A549 (cell line): ENCODE measurements at regions of chr9 and their contacts with region 1.

Region 1: DNA sequence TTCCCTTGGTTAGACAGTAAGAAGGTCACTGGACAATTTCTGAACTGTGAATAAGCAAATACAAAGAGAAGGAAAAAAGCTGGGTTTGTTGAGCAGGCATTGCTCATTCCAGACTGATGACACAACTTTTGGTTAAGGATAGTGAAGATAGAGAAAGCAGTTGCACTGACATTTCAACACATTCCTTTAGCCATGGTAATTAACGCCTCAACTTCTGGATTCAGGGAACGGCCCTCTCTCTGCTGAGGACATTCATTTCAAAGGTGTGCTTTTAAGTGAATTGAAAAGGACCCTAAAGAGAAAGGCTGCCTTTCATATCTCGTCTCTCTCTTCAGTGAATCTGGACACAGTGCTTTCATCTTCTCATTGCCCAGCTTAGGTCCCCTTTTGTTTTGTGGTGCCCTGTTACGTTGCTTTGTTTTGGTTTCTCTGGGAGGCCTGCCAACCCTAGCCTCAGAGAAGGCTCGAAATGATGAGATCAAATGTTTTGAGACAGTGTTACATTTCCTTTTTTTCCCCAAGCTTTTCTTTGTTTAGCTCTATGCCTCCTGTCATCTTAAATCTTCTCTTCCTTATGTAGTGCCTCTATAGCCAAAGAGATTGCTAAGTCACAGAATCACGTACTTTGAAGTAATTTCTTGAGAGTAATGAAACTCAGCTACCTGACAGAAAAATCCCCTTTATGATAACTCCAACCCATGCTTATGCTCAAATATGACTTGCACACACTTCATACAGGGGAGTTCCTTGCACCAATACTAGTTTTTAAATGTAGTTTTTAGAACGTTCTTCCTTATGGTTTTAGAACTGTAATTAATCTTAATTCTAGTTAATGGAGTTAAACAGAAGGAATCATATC is 94.4 kb upstream of the IFNE start:
- DNase-seq: peak in 1 of 2 experiments; percentile 80
- ATAC-seq: peak; percentile 70
- H3K4me3 ChIP-seq: peak overlapping the region; percentile 25; the same call in 2 of the 3 replicates
- H3K27ac ChIP-seq: peak overlapping the region; percentile 85 to 93
- H3K4me1 ChIP-seq: peaks cover 86% of the 10 kb centered on the region
- CTCF ChIP-seq: no peak
- EP300 ChIP-seq: peak; percentile 32 to 62; a peak in 2 of 5 replicates
- POLR2A ChIP-seq: no peak
- RAD21 ChIP-seq: peak in 1 of 2 experiments; percentile 1; a peak in 1 of 5 replicates

Region 2: DNA sequence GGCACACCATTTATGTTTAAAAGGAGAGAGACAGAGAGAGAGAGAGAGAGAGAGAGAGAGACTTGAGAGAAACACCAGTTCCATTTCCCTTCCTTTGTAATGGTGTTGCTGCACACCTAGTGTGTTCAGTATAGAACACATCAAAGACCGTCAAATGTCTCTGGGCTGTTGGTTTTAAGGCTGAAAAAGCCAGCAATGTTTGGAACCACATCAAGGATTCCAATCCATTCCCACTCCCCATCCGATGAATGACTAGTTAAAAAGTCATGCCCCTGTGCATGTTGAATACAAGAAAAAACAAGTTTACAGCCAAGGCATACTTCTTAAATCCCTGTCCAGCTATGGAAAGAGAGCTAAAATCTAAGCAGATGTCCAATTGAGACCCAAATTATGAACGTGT is 11.4 kb before region 1 on chr9:
- CTCF ChIA-PET with region 1: interaction called, 22 read pairs
- POLR2A ChIA-PET with region 1: interaction called, 31 read pairs
- DNase-seq: no peak
- ATAC-seq: peak; percentile 9 to 52; a peak in 4 of 6 replicates
- H3K4me3 ChIP-seq: peak overlapping the region; percentile 79; the same call in 2 of the 3 replicates
- H3K27ac ChIP-seq: peak overlapping the region; percentile 84 to 94
- H3K4me1 ChIP-seq: peaks cover 68% of the 10 kb centered on the region
- CTCF ChIP-seq: no peak
- EP300 ChIP-seq: no peak; a peak in 1 of 5 replicates
- POLR2A ChIP-seq: no peak
- RAD21 ChIP-seq: 0 out of 5 replicates have a peak, but pooled peaks of 1 of the 2 experiments have one; percentile 2

Region 3: DNA sequence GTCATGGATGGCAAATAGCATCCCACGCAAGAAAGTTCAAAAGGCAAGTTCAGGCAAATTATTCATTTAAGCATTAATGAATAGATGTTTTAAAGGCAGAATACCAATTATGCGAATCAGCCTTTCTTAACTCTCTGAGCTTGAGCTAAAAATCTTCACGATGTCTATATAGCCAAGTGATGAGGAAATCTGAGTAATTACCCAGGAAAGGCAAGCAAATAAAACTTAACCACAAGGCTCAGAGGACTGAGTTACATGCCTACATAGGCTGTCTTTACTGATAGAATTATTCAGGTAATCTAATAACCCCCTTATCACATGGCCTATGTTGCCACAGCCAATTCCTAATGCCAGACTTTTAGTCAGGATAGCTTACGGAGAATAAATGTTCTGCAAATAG is 105.1 kb after region 1 on chr9:
- CTCF ChIA-PET with region 1: no interaction called
- POLR2A ChIA-PET with region 1: interaction called, 15 read pairs
- DNase-seq: peak in 1 of 2 experiments; percentile 81
- ATAC-seq: peak; percentile 7 to 27; a peak in 3 of 6 replicates
- H3K4me3 ChIP-seq: peak overlapping the region; percentile 13; the same call in 2 of the 3 replicates
- H3K27ac ChIP-seq: peak overlapping the region; percentile 92 to 94
- H3K4me1 ChIP-seq: peaks cover 92% of the 10 kb centered on the region
- CTCF ChIP-seq: no peak
- EP300 ChIP-seq: peak in 1 of 2 experiments; percentile 70; a peak in 2 of 5 replicates
- POLR2A ChIP-seq: no peak
- RAD21 ChIP-seq: no peak